Colonic mucosa (tissue), 4 donors: ENCODE measurements at regions of chr12 and their contacts with region 1.

Region 1: DNA sequence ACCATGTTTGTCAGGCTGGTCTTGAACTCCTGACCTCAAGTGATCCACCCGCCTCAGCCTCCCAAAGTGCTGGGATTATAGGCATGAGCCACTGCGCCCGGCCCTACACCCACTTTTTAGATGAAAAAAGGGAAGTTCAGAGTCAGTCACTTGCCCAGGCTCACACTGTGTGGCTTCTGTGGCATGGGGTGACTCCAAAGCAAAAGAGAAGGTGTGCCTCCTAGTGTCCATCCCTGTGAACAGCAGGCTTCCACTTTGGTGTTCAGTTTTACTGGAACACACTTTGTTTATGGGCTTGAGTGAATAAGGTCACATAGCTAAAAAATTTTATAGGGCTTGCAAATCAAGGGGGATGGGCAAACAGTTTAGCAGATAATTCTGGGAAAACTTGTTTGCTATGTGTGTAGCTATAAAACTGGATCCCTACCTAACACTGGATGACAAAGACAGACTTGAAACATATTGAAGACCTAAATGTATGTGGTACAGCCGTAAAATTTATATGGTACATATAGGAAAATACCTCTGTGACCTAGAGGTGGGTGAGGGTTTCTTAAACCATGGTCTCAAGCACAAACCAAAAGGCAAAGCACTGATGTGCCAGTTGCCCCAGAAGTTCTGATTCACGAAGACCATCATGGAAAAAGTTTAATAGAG is 54.9 kb downstream of the EID3 start:
- DNase-seq: peak; percentile 73
- H3K4me3 ChIP-seq: no peak overlapping the region
- H3K27ac ChIP-seq: no peak overlapping the region
- H3K4me1 ChIP-seq: no peaks in the 10 kb centered on the region
- H3K27me3 ChIP-seq: no peaks in the 10 kb centered on the region
- CTCF ChIP-seq: peak; percentile 85

Region 2: DNA sequence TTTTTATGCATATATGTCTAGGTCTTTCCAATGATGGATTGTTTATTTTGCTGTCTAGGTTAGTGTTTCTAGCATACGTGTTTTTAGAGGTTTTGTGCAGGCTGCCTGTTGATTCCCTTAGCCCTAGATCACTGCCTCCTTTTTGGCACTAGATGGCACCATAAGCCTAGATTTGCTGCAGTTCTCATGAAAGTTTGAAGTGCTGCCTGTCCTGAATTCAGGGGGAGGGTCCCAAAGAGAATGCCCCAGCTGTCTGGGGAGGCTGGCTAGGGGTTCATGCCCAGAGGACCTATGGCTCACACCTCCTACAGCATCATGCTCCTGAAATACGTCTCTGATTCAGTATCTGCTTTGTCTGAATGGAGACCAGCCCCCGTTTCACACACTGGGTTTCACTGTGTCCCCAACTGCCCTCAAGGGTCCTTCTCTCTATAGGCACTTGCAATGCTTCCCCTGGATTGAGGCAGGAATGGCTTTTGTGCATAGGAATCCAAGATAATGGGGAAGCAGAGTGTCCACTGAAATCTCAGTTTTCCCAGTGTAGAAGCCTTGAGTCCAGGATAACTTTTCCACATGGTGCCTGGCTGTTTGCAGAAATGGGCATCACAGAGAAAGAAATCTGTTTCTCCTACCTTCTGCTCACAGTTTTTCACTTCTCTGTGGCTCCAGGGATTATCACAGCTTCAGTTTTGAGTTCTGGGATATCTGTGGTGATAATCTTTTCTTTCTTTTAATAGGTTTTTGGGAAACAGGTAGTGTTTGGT is 157.1 kb before region 1 on chr12:
- intact Hi-C with region 1: loop called (anchors 5 kb)
- DNase-seq: peak; percentile 44
- H3K4me3 ChIP-seq: no peak overlapping the region
- H3K27ac ChIP-seq: no peak overlapping the region
- H3K4me1 ChIP-seq: no peaks in the 10 kb centered on the region
- H3K27me3 ChIP-seq: no peaks in the 10 kb centered on the region
- CTCF ChIP-seq: peak; percentile 79

Region 3: GRCh38 chr12:104215638-104216297 is 142.7 kb before region 1 on chr12 and contains the start of gene TXNRD1:
- intact Hi-C with region 1: loop called (anchors 5 kb)
- DNase-seq: peak; percentile 78
- H3K4me3 ChIP-seq: peak within 1 kb of the TSS; percentile 44
- H3K27ac ChIP-seq: no peak within 1 kb of the TSS
- H3K4me1 ChIP-seq: peaks cover 3% of the 10 kb centered on the region
- H3K27me3 ChIP-seq: no peaks in the 10 kb centered on the region
- CTCF ChIP-seq: peak; percentile 75
- total RNA-seq, gene TXNRD1: 110 to 129 TPM

Region 4: DNA sequence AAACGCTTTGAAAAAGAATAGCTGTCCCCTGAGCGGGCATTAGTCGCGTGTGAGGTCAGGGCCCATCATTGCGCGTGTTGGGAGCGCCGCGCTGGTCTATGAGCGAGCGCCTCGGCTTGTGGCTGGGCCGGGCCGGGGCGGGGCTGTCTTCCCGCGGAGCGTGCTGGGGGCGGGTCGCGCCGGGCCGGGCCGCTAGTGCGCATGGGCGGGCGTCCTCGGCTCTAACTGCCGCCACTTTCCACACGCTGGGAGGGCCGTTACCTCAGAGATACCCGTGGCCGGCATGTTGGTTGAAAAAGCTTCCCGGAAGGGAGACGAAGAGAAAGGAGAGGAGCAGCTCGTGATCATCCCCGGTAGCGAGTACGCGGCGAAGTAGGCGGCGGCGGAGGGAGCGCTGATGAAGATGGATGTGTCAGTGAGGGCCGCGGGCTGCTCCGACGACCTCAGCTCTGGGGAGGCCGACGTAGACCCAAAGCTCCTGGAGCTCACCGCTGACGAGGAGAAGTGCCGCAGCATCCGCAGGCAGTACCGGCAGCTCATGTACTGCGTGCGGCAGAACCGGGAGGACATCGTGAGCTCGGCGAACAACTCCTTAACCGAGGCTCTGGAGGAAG is 54.8 kb before region 1 on chr12 and contains the start of gene EID3:
- intact Hi-C with region 1: loop called (anchors 10 kb)
- DNase-seq: peak; percentile 89
- H3K4me3 ChIP-seq: peak within 1 kb of the TSS; percentile 34
- H3K27ac ChIP-seq: peak within 1 kb of the TSS; percentile 51
- H3K4me1 ChIP-seq: peaks cover 3% of the 10 kb centered on the region
- H3K27me3 ChIP-seq: no peaks in the 10 kb centered on the region
- CTCF ChIP-seq: no peak
- total RNA-seq, gene EID3: 0.98 to 2.5 TPM